Calu3 (cell line): ENCODE measurements at regions of chr17 and their contacts with region 1.

Region 1: GRCh38 chr17:49523196-49523595 is 28.1 kb downstream of the NGFR start:
- DNase-seq: no peak
- H3K4me3 Mint-ChIP-seq: no peak overlapping the region
- H3K27ac Mint-ChIP-seq: no peak overlapping the region
- H3K4me1 Mint-ChIP-seq: no peaks in the 10 kb centered on the region
- H3K27me3 Mint-ChIP-seq: peaks cover 74% of the 10 kb centered on the region
- CTCF ChIP-seq: no peak

Region 2: GRCh38 chr17:49946964-49947584 is 423.9 kb after region 1 on chr17:
- CTCF ChIA-PET with region 1: interaction called, 11 read pairs
- intact Hi-C with region 1: no loop called
- DNase-seq: no peak
- H3K4me3 Mint-ChIP-seq: no peak overlapping the region
- H3K27ac Mint-ChIP-seq: no peak overlapping the region
- H3K4me1 Mint-ChIP-seq: no peaks in the 10 kb centered on the region
- H3K27me3 Mint-ChIP-seq: peaks cover 97% of the 10 kb centered on the region
- CTCF ChIP-seq: no peak